B cell (primary cell): ENCODE measurements at regions of chr14 and their contacts with region 1.

Region 1: DNA sequence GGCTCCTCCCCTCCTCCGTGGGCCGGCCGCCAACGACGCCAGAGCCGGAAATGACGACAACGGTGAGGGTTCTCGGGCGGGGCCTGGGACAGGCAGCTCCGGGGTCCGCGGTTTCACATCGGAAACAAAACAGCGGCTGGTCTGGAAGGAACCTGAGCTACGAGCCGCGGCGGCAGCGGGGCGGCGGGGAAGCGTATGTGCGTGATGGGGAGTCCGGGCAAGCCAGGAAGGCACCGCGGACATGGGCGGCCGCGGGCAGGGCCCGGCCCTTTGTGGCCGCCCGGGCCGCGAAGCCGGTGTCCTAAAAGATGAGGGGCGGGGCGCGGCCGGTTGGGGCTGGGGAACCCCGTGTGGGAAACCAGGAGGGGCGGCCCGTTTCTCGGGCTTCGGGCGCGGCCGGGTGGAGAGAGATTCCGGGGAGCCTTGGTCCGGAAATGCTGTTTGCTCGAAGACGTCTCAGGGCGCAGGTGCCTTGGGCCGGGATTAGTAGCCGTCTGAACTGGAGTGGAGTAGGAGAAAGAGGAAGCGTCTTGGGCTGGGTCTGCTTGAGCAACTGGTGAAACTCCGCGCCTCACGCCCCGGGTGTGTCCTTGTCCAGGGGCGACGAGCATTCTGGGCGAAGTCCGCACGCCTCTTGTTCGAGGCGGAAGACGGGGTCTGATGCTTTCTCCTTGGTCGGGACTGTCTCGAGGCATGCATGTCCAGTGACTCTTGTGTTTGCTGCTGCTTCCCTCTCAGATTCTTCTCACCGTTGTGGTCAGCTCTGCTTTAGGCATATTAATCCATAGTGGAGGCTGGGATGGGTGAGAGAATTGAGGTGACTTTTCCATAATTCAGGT is at the start of gene PSEN1:
- DNase-seq: peak; percentile 99
- ATAC-seq: peak; percentile 94
- H3K4me3 ChIP-seq: peak within 1 kb of the TSS; percentile 65 to 98 (median 90)
- H3K4me3 Mint-ChIP-seq: peak within 1 kb of the TSS; percentile 94
- H3K27ac ChIP-seq: peak within 1 kb of the TSS; percentile 80 to 100
- H3K27ac Mint-ChIP-seq: peak within 1 kb of the TSS; percentile 94
- H3K4me1 ChIP-seq: peaks cover 13 to 16% of the 10 kb centered on the region in 2 donors
- H3K4me1 Mint-ChIP-seq: peaks cover 25% of the 10 kb centered on the region
- H3K27me3 ChIP-seq: no peaks in the 10 kb centered on the region
- H3K27me3 Mint-ChIP-seq: no peaks in the 10 kb centered on the region
- CTCF ChIP-seq: no peak
- total RNA-seq, gene PSEN1: 71.6 and 75.9 TPM in 2 replicates

Region 2: DNA sequence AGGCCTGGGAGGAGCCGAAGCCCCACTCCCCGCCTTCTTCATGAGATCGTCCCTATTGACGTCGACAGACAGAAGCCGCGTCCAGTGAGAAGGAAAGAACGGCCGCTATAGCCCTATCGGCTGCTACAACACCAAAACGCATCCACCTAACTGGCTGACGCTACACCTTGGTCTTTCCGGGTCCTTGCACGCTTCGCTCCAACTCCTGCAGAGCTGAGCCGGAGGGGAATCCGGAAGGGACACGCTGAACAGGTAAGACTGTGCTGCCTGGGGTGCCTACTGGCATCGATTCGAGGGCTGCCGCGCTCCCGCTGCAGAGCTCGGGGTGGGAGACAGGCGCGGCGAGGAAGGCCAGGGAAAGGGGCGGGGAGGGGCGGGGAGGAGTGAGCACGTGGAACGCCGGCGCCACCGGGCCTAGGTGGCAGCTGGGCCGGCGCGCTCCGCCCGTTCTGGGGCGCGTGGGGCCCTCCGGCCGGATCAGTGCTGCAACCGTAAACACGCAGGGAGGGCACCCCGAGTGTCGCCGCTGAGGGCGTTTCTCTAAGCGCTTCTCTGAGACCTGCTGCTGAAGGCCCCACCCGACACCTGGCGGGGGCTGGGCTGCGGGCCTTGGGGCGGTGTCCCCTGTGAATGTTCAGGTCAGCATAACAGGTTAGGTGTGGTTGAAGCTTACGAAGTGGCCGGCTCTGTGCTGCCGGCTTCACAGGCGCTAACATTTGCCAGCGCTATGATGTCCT is 210.1 kb before region 1 on chr14 and contains the start of gene DCAF4:
- CTCF ChIA-PET with region 1: no interaction called
- POLR2A ChIA-PET with region 1: no interaction called
- intact Hi-C with region 1: loop called (anchors 1 kb)
- DNase-seq: peak; percentile 97
- ATAC-seq: peak; percentile 91
- H3K4me3 ChIP-seq: peak within 1 kb of the TSS; percentile 55 to 87 (median 70)
- H3K4me3 Mint-ChIP-seq: peak within 1 kb of the TSS; percentile 99
- H3K27ac ChIP-seq: peak within 1 kb of the TSS; percentile 66 to 89
- H3K27ac Mint-ChIP-seq: peak within 1 kb of the TSS; percentile 95
- H3K4me1 ChIP-seq: peaks cover 10 to 23% of the 10 kb centered on the region in 2 donors
- H3K4me1 Mint-ChIP-seq: peaks cover 15% of the 10 kb centered on the region
- H3K27me3 ChIP-seq: no peaks in the 10 kb centered on the region
- H3K27me3 Mint-ChIP-seq: peaks cover 7% of the 10 kb centered on the region
- CTCF ChIP-seq: no peak
- total RNA-seq, gene DCAF4: 35.3 and 36.2 TPM in 2 replicates

Region 3: GRCh38 chr14:73026845-73027542 is 109.6 kb before region 1 on chr14 and contains the start of gene ZFYVE1:
- CTCF ChIA-PET with region 1: no interaction called
- POLR2A ChIA-PET with region 1: interaction called, 6 read pairs
- intact Hi-C with region 1: loop called (anchors 1 kb)
- DNase-seq: peak; percentile 92
- ATAC-seq: peak; percentile 99
- H3K4me3 ChIP-seq: peak within 1 kb of the TSS; percentile 69 to 97 (median 95)
- H3K4me3 Mint-ChIP-seq: peak within 1 kb of the TSS; percentile 96
- H3K27ac ChIP-seq: peak within 1 kb of the TSS in 1 of 2 donors; percentile 71
- H3K27ac Mint-ChIP-seq: peak within 1 kb of the TSS; percentile 94
- H3K4me1 ChIP-seq: peaks cover 16 to 18% of the 10 kb centered on the region in 2 donors
- H3K4me1 Mint-ChIP-seq: peaks cover 38% of the 10 kb centered on the region
- H3K27me3 ChIP-seq: no peaks in the 10 kb centered on the region
- H3K27me3 Mint-ChIP-seq: no peaks in the 10 kb centered on the region
- CTCF ChIP-seq: no peak
- total RNA-seq, gene ZFYVE1: 21.2 and 22.3 TPM in 2 replicates

Region 4: DNA sequence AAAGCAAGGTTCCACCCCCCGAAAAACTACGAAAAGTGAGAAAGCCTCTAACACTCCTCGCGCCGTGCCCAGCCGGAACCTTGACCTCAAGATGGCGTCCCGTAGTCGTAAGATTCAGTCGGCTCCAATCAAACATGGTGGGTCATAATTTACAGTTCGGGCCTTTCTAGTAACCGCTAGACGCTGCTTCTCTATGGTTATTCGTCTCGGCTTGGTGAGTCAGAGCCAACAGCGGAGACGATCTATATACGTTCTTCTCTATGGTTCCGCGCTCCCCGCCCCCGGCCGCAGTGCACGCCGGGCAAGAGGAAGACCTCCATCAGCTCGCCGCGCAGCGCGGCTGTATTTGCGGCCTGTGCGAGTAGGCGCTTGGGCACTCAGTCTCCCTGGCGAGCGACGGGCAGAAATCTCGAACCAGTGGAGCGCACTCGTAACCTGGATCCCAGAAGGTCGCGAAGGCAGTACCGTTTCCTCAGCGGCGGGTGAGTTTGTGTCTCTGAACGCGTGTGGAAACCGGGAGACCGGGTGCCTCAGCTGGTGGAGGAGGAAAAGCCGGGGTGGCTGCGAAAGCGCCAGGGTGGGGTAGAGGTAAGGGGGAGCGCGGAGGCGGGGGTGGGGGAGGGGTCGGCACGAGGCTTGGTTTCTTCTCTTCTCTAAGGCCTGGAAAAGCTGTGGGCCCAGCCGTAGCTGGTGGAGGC is 78.2 kb before region 1 on chr14 and contains the start of gene RBM25:
- CTCF ChIA-PET with region 1: no interaction called
- POLR2A ChIA-PET with region 1: interaction called, 12 read pairs
- intact Hi-C with region 1: loop called (anchors 1 kb)
- DNase-seq: peak; percentile 98
- ATAC-seq: peak; percentile 94
- H3K4me3 ChIP-seq: peak within 1 kb of the TSS; percentile 77 to 94 (median 84)
- H3K4me3 Mint-ChIP-seq: no peak within 1 kb of the TSS
- H3K27ac ChIP-seq: peak within 1 kb of the TSS; percentile 84 to 91
- H3K27ac Mint-ChIP-seq: no peak within 1 kb of the TSS
- H3K4me1 ChIP-seq: peaks cover 25 to 28% of the 10 kb centered on the region in 2 donors
- H3K4me1 Mint-ChIP-seq: peaks cover 39% of the 10 kb centered on the region
- H3K27me3 ChIP-seq: no peaks in the 10 kb centered on the region
- H3K27me3 Mint-ChIP-seq: no peaks in the 10 kb centered on the region
- CTCF ChIP-seq: no peak
- total RNA-seq, gene RBM25: 137 and 151 TPM in 2 replicates

Region 5: GRCh38 chr14:73173092-73173735 is 36.6 kb after region 1 on chr14:
- CTCF ChIA-PET with region 1: no interaction called
- POLR2A ChIA-PET with region 1: no interaction called
- intact Hi-C with region 1: no loop called
- DNase-seq: peak; percentile 52
- ATAC-seq: no peak
- H3K4me3 ChIP-seq: no peak overlapping the region
- H3K4me3 Mint-ChIP-seq: no peak overlapping the region
- H3K27ac ChIP-seq: peak overlapping the region in 1 of 2 donors; percentile 17
- H3K27ac Mint-ChIP-seq: no peak overlapping the region
- H3K4me1 ChIP-seq: no peaks in the 10 kb centered on the region
- H3K4me1 Mint-ChIP-seq: no peaks in the 10 kb centered on the region
- H3K27me3 ChIP-seq: no peaks in the 10 kb centered on the region
- H3K27me3 Mint-ChIP-seq: no peaks in the 10 kb centered on the region
- CTCF ChIP-seq: peak; percentile 71

Region 6: GRCh38 chr14:73458151-73458976 is 321.8 kb after region 1 on chr14 and contains the start of gene NUMB:
- CTCF ChIA-PET with region 1: no interaction called
- POLR2A ChIA-PET with region 1: no interaction called
- intact Hi-C with region 1: loop called (anchors 1 kb)
- DNase-seq: peak; percentile 99
- ATAC-seq: peak; percentile 97
- H3K4me3 ChIP-seq: peak within 1 kb of the TSS; percentile 74 to 97 (median 95)
- H3K4me3 Mint-ChIP-seq: peak within 1 kb of the TSS; percentile 96
- H3K27ac ChIP-seq: peak within 1 kb of the TSS; percentile 74 to 91
- H3K27ac Mint-ChIP-seq: peak within 1 kb of the TSS; percentile 95
- H3K4me1 ChIP-seq: peaks cover 23 to 34% of the 10 kb centered on the region in 2 donors
- H3K4me1 Mint-ChIP-seq: peaks cover 53% of the 10 kb centered on the region
- H3K27me3 ChIP-seq: no peaks in the 10 kb centered on the region
- H3K27me3 Mint-ChIP-seq: no peaks in the 10 kb centered on the region
- CTCF ChIP-seq: no peak
- total RNA-seq, gene NUMB: 102 and 108 TPM in 2 replicates

Region 7: DNA sequence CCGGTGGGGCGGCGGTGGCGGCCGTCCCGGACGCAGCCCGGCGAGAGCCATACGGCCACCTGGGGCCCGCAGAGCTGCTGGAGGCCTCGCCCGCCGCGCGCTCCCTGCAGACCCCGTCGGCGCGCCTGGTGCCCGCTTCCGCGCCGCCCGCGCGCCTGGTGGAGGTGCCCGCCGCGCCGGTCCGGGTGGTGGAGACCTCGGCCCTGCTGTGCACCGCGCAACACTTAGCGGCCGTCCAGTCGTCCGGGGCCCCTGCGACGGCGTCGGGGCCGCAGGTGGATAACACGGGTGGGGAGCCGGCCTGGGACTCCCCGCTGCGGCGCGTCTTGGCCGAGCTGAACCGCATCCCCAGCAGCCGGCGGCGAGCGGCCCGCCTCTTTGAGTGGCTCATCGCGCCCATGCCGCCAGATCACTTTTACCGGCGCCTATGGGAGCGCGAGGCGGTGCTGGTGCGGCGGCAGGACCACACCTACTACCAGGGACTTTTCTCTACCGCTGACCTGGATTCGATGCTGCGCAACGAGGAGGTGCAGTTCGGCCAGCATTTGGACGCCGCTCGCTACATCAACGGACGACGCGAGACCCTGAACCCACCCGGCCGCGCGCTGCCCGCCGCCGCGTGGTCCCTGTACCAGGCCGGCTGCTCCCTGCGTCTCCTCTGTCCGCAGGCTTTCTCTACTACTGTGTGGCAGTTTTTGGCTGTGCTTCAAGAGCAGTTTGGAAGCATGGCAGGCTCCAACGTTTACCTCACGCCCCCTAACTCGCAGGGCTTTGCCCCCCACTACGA is 354.8 kb after region 1 on chr14:
- CTCF ChIA-PET with region 1: no interaction called
- POLR2A ChIA-PET with region 1: interaction called, 3 read pairs
- intact Hi-C with region 1: loop called (anchors 1 kb)
- DNase-seq: peak; percentile 79
- ATAC-seq: peak; percentile 50
- H3K4me3 ChIP-seq: peak overlapping the region; percentile 56 to 86 (median 83)
- H3K4me3 Mint-ChIP-seq: peak overlapping the region; percentile 94
- H3K27ac ChIP-seq: peak overlapping the region; percentile 55 to 64
- H3K27ac Mint-ChIP-seq: peak overlapping the region; percentile 92
- H3K4me1 ChIP-seq: peaks cover 21 to 32% of the 10 kb centered on the region in 2 donors
- H3K4me1 Mint-ChIP-seq: peaks cover 35% of the 10 kb centered on the region
- H3K27me3 ChIP-seq: no peaks in the 10 kb centered on the region
- H3K27me3 Mint-ChIP-seq: no peaks in the 10 kb centered on the region
- CTCF ChIP-seq: no peak

Region 8: DNA sequence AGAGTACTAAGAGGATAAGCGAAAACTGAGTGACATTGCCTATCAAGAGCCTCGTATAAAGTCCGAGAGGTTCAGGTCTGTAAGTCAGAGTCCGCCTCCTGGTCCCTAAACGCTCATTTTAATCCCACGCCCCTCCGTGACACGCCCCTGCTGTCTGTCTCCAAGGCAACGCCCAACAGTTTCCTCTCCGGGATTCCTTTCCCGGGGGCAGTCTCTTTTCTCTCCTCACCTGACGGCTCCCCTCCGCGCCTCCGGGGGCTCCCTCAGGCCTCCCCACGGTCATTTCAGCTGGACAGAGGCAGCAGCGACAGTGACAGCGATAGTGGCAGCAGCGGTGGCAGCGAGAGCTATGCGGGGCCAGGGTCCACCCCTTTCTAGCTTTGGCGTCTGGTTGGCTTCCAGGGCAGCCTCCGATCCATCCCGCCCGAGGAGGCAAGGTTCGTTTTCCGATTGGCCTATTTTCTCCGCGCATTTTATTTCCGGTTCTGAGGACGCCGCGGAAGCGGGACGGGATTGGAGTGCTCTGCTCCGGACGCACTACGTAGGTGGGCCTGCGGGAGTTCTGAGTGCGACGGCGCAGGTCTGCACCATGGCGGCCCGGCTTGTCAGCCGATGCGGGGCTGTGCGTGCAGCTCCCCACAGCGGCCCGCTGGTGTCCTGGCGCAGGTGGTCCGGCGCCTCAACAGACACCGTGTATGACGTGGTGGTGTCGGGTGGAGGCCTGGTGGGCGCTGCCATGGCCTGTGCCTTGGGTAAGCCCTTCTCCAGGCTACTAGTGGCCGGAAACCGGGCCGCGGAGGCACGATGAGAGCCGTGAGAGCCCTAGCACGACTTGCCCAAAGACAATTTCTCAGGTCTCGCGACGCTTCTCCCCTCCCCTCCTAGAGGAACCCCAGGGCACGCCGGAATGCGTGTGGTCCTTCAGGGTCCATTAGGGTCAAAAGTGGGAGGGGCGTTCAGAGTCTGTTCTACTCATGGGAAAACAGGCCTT is 813.4 kb after region 1 on chr14 and contains the starts of genes COQ6 and FAM161B:
- CTCF ChIA-PET with region 1: no interaction called
- POLR2A ChIA-PET with region 1: no interaction called
- intact Hi-C with region 1: loop called (anchors 2 kb)
- DNase-seq: peak; percentile 96
- ATAC-seq: peak; percentile 93
- H3K4me3 ChIP-seq: peak within 1 kb of the TSS; percentile 63 to 94 (median 89)
- H3K4me3 Mint-ChIP-seq: peak within 1 kb of the TSS; percentile 100
- H3K27ac ChIP-seq: peak within 1 kb of the TSS; percentile 78 to 96
- H3K27ac Mint-ChIP-seq: peak within 1 kb of the TSS; percentile 95
- H3K4me1 ChIP-seq: peaks cover 11 to 12% of the 10 kb centered on the region in 2 donors
- H3K4me1 Mint-ChIP-seq: peaks cover 20% of the 10 kb centered on the region
- H3K27me3 ChIP-seq: no peaks in the 10 kb centered on the region
- H3K27me3 Mint-ChIP-seq: no peaks in the 10 kb centered on the region
- CTCF ChIP-seq: peak; percentile 11
- total RNA-seq, gene COQ6: 34.1 and 38.2 TPM in 2 replicates
- total RNA-seq, gene FAM161B: 5.9 and 6.4 TPM in 2 replicates